Mammary epithelial cell (primary cell): ENCODE measurements at regions of chr1 and their contacts with region 1.

Region 1: GRCh38 chr1:186736971-186737685 is 56.9 kb upstream of the PTGS2 start:
- DNase-seq: peak; percentile 70
- H3K4me3 ChIP-seq: no peak overlapping the region
- H3K27ac ChIP-seq: peak overlapping the region; percentile 76
- H3K4me1 ChIP-seq: peaks cover 34% of the 10 kb centered on the region
- H3K27me3 ChIP-seq: no peaks in the 10 kb centered on the region
- CTCF ChIP-seq: no peak

Region 2: GRCh38 chr1:186750266-186750665 is 13.1 kb after region 1 on chr1:
- CTCF ChIA-PET with region 1: no interaction called
- dilution Hi-C with region 1: no loop called
- in situ Hi-C with region 1: no loop called
- intact Hi-C with region 1: loop called (anchors 1 kb)
- DNase-seq: peak; percentile 73
- H3K4me3 ChIP-seq: no peak overlapping the region
- H3K27ac ChIP-seq: peak overlapping the region; percentile 77
- H3K4me1 ChIP-seq: peaks cover 17% of the 10 kb centered on the region
- H3K27me3 ChIP-seq: no peaks in the 10 kb centered on the region
- CTCF ChIP-seq: no peak